Endothelial cell of umbilical vein (primary cell): ENCODE measurements at regions of chr2 and their contacts with region 1.

Region 1: DNA sequence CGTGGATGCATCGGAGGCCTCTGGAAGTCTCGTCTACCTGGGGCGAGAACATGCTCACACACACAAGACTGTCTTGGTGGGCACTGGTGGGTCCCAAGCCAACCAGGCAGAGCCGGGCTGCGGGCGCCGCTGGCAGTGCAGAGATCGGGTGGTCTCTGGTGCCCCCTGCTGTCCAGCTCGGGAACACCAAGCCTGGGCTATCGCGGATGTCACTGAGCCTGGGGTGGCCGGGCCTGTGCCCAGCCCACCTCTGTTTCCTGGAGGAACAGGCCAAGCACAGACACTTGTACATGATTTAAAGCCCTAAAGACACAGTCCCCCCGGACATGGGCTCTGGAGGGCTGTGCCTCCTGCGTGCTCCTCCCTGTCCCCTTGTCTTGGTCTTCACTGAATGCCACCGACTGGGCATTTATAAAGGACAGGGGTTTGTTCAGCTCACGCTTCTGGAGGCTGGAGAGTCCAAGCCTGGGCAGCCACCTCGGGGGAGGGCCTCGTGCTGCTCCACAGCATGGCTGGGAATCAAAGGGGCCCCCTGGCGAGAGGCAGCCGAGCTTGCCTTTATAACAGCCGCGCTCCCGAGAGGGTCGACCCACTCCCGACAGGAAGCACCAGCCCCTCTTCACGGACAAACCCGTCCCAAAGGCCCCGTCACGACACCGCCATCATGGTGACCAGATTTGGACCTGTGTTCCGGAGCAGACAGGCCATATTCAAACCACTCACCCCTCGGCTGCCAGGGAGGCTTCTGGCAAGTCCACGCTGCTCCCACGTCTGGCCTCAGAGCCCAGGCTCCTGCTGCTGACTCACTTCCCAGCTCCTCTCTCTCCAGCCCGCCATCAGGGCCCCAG is 3.6 kb upstream of the OTOS start:
- DNase-seq: peak; percentile 49
- H3K4me3 ChIP-seq: no peak overlapping the region
- H3K27ac ChIP-seq: no peak overlapping the region
- H3K4me1 ChIP-seq: no peaks in the 10 kb centered on the region
- H3K27me3 ChIP-seq: no peaks in the 10 kb centered on the region
- CTCF ChIP-seq: peak; percentile 84 to 98
- POLR2A ChIP-seq: no peak

Region 2: DNA sequence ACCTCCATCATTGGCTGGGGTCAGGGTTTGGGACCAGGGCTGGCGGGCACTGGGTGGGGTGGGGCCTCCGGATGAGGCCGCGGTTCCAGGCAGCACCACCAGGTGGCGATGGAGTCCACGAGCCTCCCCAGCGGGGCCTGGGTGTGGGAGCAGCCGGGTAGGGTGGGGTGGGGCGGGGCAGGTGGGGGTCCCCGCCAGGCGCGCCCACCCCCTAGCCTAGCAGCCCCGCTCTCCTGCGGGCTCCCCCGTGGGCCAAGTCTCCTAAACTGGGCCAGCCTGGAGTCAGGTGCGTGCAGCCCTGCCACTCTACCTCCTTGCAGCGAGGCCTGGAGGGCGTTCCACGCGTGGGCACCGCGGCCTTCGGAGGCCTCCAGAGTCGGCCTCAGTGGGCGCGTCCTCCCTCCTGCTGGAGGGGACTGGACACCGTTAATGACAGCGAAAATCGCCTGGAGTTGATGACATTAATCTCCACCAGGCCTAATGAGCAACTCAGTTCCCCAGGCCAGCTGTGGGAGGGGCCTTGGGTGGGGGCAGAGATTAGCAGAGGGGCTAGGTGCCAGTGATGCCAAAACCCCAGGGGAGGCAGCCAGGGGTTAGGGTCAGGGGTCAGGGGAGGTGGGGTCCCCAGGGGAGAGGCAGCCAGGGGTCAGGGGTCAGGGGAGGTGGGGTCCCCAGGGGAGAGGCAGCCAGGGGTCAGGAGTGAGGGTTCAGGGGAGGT is 1108.5 kb before region 1 on chr2:
- CTCF ChIA-PET with region 1: no interaction called
- POLR2A ChIA-PET with region 1: no interaction called
- dilution Hi-C with region 1: no loop called
- intact Hi-C with region 1: loop called (anchors 1 kb)
- DNase-seq: no peak
- H3K4me3 ChIP-seq: no peak overlapping the region
- H3K27ac ChIP-seq: no peak overlapping the region
- H3K4me1 ChIP-seq: no peaks in the 10 kb centered on the region
- H3K27me3 ChIP-seq: peaks cover 0 to 3% of the 10 kb centered on the region in 2 experiments
- CTCF ChIP-seq: peak; percentile 38 to 92
- POLR2A ChIP-seq: no peak

Region 3: GRCh38 chr2:239143858-239144718 is 999.9 kb before region 1 on chr2:
- CTCF ChIA-PET with region 1: interaction called, 3 read pairs
- POLR2A ChIA-PET with region 1: no interaction called
- dilution Hi-C with region 1: no loop called
- intact Hi-C with region 1: loop called (anchors 5 kb)
- DNase-seq: peak; percentile 37
- H3K4me3 ChIP-seq: no peak overlapping the region
- H3K27ac ChIP-seq: no peak overlapping the region
- H3K4me1 ChIP-seq: no peaks in the 10 kb centered on the region
- H3K27me3 ChIP-seq: no peaks in the 10 kb centered on the region
- CTCF ChIP-seq: peak; percentile 59 to 72
- POLR2A ChIP-seq: no peak

Region 4: GRCh38 chr2:239934571-239935171 is 209.4 kb before region 1 on chr2:
- CTCF ChIA-PET with region 1: interaction called, 7 read pairs
- POLR2A ChIA-PET with region 1: no interaction called
- dilution Hi-C with region 1: no loop called
- intact Hi-C with region 1: loop called (anchors 10 kb)
- DNase-seq: peak; percentile 40
- H3K4me3 ChIP-seq: no peak overlapping the region
- H3K27ac ChIP-seq: no peak overlapping the region
- H3K4me1 ChIP-seq: no peaks in the 10 kb centered on the region
- H3K27me3 ChIP-seq: no peaks in the 10 kb centered on the region
- CTCF ChIP-seq: peak; percentile 60 to 70
- POLR2A ChIP-seq: no peak

Region 5: DNA sequence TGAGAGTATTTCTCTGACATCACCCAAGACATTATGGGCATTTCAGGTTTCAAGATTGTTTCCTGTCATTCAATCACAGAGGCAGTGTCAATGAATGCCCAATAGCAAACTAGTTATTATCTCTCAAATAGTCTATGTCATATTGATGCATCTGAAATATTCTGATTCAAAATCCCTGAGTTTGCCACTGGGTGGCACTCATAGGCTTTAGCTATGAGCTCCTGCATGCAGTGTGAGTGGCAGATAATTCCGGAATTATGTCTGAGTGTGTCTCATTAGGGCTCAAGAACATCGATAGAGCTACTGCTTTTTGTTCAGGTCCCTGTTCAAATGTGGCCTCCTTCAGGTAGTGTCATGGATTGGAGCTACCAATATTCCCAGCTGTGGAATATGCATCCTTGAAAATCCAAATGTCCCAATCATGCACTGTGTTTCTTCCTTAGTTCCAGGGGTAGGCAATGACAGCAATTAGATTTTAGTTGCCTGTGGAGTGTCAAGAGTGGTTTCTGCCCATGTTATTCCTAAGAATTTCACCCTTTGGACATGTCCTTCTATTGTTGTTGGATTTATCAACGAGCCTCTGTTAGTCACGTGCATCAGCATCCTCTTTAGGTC is 82.9 kb before region 1 on chr2:
- CTCF ChIA-PET with region 1: interaction called, 199 read pairs
- POLR2A ChIA-PET with region 1: interaction called, 3 read pairs
- dilution Hi-C with region 1: no loop called
- intact Hi-C with region 1: loop called (anchors 1 kb)
- DNase-seq: peak; percentile 60
- H3K4me3 ChIP-seq: no peak overlapping the region
- H3K27ac ChIP-seq: no peak overlapping the region
- H3K4me1 ChIP-seq: no peaks in the 10 kb centered on the region
- H3K27me3 ChIP-seq: no peaks in the 10 kb centered on the region
- CTCF ChIP-seq: peak; percentile 34 to 51
- POLR2A ChIP-seq: no peak

Region 6: GRCh38 chr2:240509667-240510512 is 365.9 kb after region 1 on chr2:
- CTCF ChIA-PET with region 1: no interaction called
- POLR2A ChIA-PET with region 1: no interaction called
- dilution Hi-C with region 1: no loop called
- intact Hi-C with region 1: no loop called
- DNase-seq: no peak
- H3K4me3 ChIP-seq: no peak overlapping the region
- H3K27ac ChIP-seq: no peak overlapping the region
- H3K4me1 ChIP-seq: no peaks in the 10 kb centered on the region
- H3K27me3 ChIP-seq: no peaks in the 10 kb centered on the region
- CTCF ChIP-seq: no peak
- POLR2A ChIP-seq: no peak